IMR-90 (cell line): ENCODE measurements at regions of chr17 and their contacts with region 1.

Region 1: DNA sequence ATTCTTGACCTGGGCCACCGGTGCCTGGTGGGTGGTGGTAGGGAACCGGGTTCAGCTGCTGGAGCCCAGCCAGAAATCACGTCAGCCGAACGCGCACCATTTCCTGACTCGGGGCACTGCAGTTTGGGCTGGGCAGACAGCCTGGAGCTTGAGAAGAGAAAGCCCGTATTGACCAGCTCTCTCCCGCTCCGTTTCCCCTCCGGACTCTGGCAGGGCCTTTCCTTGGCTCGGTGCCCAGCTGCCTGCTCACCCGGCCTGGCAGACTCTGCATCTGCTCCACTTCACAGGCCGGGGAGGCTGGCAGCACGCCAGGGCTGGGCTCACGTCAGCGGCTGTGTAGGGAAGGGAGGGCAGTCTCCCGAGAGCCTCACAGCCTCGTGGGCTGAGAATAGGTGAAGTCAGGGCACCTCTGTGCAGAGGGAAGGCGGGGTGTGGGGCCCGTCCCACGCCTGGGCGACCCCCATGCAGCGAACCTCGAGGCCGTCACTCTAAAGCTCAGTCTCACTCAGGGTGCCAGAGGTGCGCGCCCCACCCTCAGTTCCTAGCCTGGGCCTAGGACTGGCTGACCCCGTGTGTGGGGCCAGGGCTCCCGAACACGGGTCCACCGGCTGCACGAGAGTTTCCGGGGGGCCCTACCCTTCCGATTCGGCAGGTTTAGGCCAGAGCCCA is 59.1 kb downstream of the OR1D5 start:
- DNase-seq: peak; percentile 96
- ATAC-seq: peak; percentile 95
- H3K4me3 ChIP-seq: no peak overlapping the region
- H3K27ac ChIP-seq: peak overlapping the region; percentile 54
- H3K4me1 ChIP-seq: peaks cover 15% of the 10 kb centered on the region
- H3K27me3 ChIP-seq: no peaks in the 10 kb centered on the region
- CTCF ChIP-seq: no peak
- POLR2A ChIP-seq: peak; percentile 64; the same call in 1 of the 2 replicates
- RAD21 ChIP-seq: peak; percentile 16; the same call in 1 of the 2 replicates

Region 2: DNA sequence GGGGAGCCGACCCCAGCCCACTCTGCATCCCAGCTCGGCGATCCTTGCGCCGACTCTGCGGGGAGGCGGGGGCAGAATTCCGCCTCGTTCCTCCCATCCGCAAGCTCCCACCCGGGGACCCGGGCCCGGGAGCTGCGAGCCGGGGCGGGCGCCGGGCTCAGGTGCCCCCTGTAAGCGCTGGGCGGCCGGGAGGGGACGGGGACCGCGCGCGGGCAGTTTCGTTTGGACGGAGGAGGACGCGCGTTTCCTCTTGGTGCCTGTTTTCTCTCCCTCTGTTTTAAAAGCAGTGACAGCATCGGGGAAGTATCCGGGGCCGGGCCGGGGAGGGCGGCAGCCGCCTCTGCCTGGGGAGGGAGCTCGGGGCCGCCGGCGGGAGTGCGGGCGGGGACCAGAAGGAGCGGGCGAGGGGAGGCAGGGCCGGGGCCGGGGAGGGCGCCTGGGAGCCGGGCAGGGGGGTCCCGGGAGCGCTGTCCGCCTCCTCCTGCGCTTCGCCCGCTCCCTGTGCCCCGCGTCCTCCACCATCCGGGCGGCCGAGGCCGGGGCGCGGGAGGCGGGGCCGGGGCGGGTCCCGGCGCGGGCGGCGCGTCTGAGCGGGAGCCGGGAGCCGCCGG is 151.1 kb before region 1 on chr17:
- CTCF ChIA-PET with region 1: no interaction called
- POLR2A ChIA-PET with region 1: no interaction called
- dilution Hi-C with region 1: no loop called
- in situ Hi-C with region 1: no loop called
- intact Hi-C with region 1: loop called (anchors 5 kb)
- DNase-seq: peak; percentile 49
- ATAC-seq: peak; percentile 79
- H3K4me3 ChIP-seq: peak overlapping the region; percentile 89
- H3K27ac ChIP-seq: peak overlapping the region; percentile 9; the same call in 1 of the 2 replicates
- H3K4me1 ChIP-seq: peaks cover 2% of the 10 kb centered on the region; the same call in 1 of the 2 replicates
- H3K27me3 ChIP-seq: no peaks in the 10 kb centered on the region; the same call in 1 of the 2 replicates
- CTCF ChIP-seq: no peak
- POLR2A ChIP-seq: no peak
- RAD21 ChIP-seq: no peak

Region 3: GRCh38 chr17:2954898-2955445 is 49.3 kb before region 1 on chr17:
- CTCF ChIA-PET with region 1: no interaction called
- POLR2A ChIA-PET with region 1: no interaction called
- dilution Hi-C with region 1: no loop called
- in situ Hi-C with region 1: no loop called
- intact Hi-C with region 1: loop called (anchors 1 kb)
- DNase-seq: peak; percentile 97
- ATAC-seq: peak; percentile 94
- H3K4me3 ChIP-seq: no peak overlapping the region
- H3K27ac ChIP-seq: no peak overlapping the region
- H3K4me1 ChIP-seq: peaks cover 11% of the 10 kb centered on the region
- H3K27me3 ChIP-seq: no peaks in the 10 kb centered on the region
- CTCF ChIP-seq: no peak
- POLR2A ChIP-seq: no peak
- RAD21 ChIP-seq: no peak